Body of pancreas (tissue), 4 donors: ENCODE measurements at regions of chr9 and their contacts with region 1.

Region 1: GRCh38 chr9:91775011-91775707 is 174.9 kb downstream of the ROR2 start:
- DNase-seq: peak; percentile 67 to 75 (median 68)
- ATAC-seq: peak; percentile 70
- H3K4me3 ChIP-seq: no peak overlapping the region
- H3K27ac ChIP-seq: no peak overlapping the region
- H3K4me1 ChIP-seq: no peaks in the 10 kb centered on the region
- H3K27me3 ChIP-seq: no peaks in the 10 kb centered on the region
- CTCF ChIP-seq: peak; percentile 69 to 87 (median 83)
- POLR2A ChIP-seq: no peak

Region 2: GRCh38 chr9:91809581-91810285 is 34.6 kb after region 1 on chr9:
- intact Hi-C with region 1: no loop called
- DNase-seq: no peak
- ATAC-seq: no peak
- H3K4me3 ChIP-seq: no peak overlapping the region
- H3K27ac ChIP-seq: no peak overlapping the region
- H3K4me1 ChIP-seq: no peaks in the 10 kb centered on the region
- H3K27me3 ChIP-seq: no peaks in the 10 kb centered on the region
- CTCF ChIP-seq: no peak
- POLR2A ChIP-seq: no peak

Region 3: GRCh38 chr9:91949946-91950664 is 174.9 kb after region 1 on chr9 and contains the start of gene ROR2:
- intact Hi-C with region 1: loop called (anchors 10 kb)
- DNase-seq: peak; percentile 53 to 71 (median 54)
- ATAC-seq: peak; percentile 63
- H3K4me3 ChIP-seq: peak within 1 kb of the TSS; percentile 5 to 35
- H3K27ac ChIP-seq: no peak within 1 kb of the TSS
- H3K4me1 ChIP-seq: peaks cover 38% of the 10 kb centered on the region
- H3K27me3 ChIP-seq: peaks cover 0 to 29% of the 10 kb centered on the region in 2 donors
- CTCF ChIP-seq: peak in 6 of 7 experiments; percentile 29 to 73 (median 50)
- POLR2A ChIP-seq: no peak
- total RNA-seq, gene ROR2: 4.0 to 5.4 TPM